Naive thymus-derived CD4-positive, alpha-beta T cell (primary cell): ENCODE measurements at regions of chr1 and their contacts with region 1.

Region 1: DNA sequence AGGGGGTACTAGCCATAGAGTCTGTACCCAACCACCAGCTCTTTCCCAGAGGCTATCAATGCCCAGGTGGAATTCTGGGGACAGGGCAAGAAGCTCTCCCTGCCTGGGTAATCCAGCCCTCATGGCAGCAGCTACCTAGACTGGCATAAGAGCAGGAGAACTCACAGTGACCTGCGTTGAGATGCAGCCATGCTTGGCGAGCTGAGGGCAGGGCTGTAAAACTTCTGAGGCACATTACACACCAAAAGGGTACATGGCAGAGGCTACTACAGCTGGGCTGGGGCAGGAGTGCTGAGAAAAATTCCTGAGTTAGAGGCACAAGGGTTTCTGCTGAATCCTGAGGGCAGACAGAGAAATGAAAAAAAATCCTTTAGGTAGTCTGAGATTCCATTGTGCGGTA is 927.9 kb upstream of the B3GALT2 start:
- DNase-seq: no peak
- ATAC-seq: no peak
- H3K4me3 ChIP-seq: no peak overlapping the region
- H3K4me3 Mint-ChIP-seq: no peak overlapping the region
- H3K27ac ChIP-seq: no peak overlapping the region
- H3K27ac Mint-ChIP-seq: peak overlapping the region in 1 of 9 donors; percentile 33
- H3K4me1 ChIP-seq: no peaks in the 10 kb centered on the region
- H3K4me1 Mint-ChIP-seq: no peaks in the 10 kb centered on the region
- H3K27me3 ChIP-seq: no peaks in the 10 kb centered on the region
- H3K27me3 Mint-ChIP-seq: no peaks in the 10 kb centered on the region

Region 2: GRCh38 chr1:194133163-194133562 is 18.9 kb after region 1 on chr1:
- CTCF ChIA-PET with region 1: no interaction called
- POLR2A ChIA-PET with region 1: no interaction called
- intact Hi-C with region 1: loop called in 1 of 2 experiments (anchors 2 kb)
- DNase-seq: no peak
- ATAC-seq: no peak
- H3K4me3 ChIP-seq: no peak overlapping the region
- H3K4me3 Mint-ChIP-seq: no peak overlapping the region
- H3K27ac ChIP-seq: no peak overlapping the region
- H3K27ac Mint-ChIP-seq: peak overlapping the region in 2 of 9 donors; percentile 42 to 61
- H3K4me1 ChIP-seq: no peaks in the 10 kb centered on the region
- H3K4me1 Mint-ChIP-seq: peaks cover 5 to 23% (median 13%) of the 10 kb centered on the region in 7 donors
- H3K27me3 ChIP-seq: no peaks in the 10 kb centered on the region
- H3K27me3 Mint-ChIP-seq: no peaks in the 10 kb centered on the region

Region 3: DNA sequence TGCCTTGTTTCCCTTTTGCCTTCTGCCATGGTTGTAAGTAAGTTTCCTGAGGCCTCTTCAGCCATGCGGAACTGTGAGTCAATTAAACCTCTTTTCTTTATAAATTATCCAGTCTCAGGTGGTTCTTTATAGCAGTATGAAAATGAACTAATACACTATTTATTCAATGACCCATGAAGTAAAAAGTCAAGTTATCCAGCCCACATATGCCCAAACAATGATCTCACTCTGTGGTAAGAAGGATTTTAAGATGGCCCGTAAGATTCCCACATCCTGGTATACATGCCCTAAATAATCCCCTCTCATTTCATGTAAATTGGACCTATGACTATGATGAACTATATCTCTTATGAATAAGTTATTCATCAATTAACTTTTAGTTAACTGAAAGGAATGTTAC is 80.4 kb after region 1 on chr1:
- CTCF ChIA-PET with region 1: no interaction called
- POLR2A ChIA-PET with region 1: interaction called, 3 read pairs
- intact Hi-C with region 1: loop called in 1 of 2 experiments (anchors 5 kb)
- DNase-seq: no peak
- ATAC-seq: no peak
- H3K4me3 ChIP-seq: no peak overlapping the region
- H3K4me3 Mint-ChIP-seq: no peak overlapping the region
- H3K27ac ChIP-seq: no peak overlapping the region
- H3K27ac Mint-ChIP-seq: peak overlapping the region in 1 of 9 donors; percentile 28
- H3K4me1 ChIP-seq: no peaks in the 10 kb centered on the region
- H3K4me1 Mint-ChIP-seq: no peaks in the 10 kb centered on the region
- H3K27me3 ChIP-seq: no peaks in the 10 kb centered on the region
- H3K27me3 Mint-ChIP-seq: no peaks in the 10 kb centered on the region